H1 (cell line): ENCODE measurements at regions of chr2 and their contacts with region 1.

Region 1: GRCh38 chr2:211745295-211746097 is 793.1 kb downstream of the ERBB4 start:
- DNase-seq: peak; percentile 36 to 58
- H3K4me3 ChIP-seq: no peak overlapping the region
- H3K27ac ChIP-seq: no peak overlapping the region
- H3K4me1 ChIP-seq: peaks cover 0 to 2% (median 0%) of the 10 kb centered on the region in 4 experiments; a peak in 1 of 7 replicates
- H3K27me3 ChIP-seq: no peaks in the 10 kb centered on the region
- CTCF ChIP-seq: peak; percentile 70 to 85 (median 80)
- EP300 ChIP-seq: no peak
- POLR2A ChIP-seq: no peak
- RAD21 ChIP-seq: peak; percentile 94 to 95

Region 2: DNA sequence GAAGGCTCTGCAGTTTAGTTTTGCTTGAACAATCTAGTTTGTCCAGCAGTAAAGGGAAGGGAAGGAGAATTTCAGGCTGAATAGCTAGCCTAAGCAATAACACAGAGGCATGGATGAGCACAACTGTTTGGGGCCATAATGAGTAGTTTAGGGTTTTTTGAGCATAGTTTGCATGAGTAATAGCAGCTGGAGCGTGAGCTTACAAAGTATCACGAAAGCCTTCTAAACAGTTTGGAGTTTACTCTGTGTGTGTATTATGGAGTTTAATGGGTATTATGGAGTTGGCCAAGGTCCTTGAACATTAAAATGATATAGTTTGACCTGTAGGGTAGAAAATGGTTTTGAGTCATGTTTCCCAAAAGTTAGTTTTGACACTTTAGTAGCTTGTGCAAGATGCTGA is 10.8 kb after region 1 on chr2:
- CTCF ChIA-PET with region 1: interaction called, 17 read pairs
- POLR2A ChIA-PET with region 1: no interaction called
- DNase-seq: no peak
- H3K4me3 ChIP-seq: no peak overlapping the region
- H3K27ac ChIP-seq: no peak overlapping the region
- H3K4me1 ChIP-seq: no peaks in the 10 kb centered on the region
- H3K27me3 ChIP-seq: no peaks in the 10 kb centered on the region
- CTCF ChIP-seq: no peak
- EP300 ChIP-seq: no peak
- POLR2A ChIP-seq: no peak
- RAD21 ChIP-seq: no peak